ENCODE measurements at regions of chr1 and their contacts with region 1.

Region 1: GRCh38 chr1:42766741-42767509 is at the starts of genes C1orf50 and P3H1:
- DNase-seq: peak; percentile 99 to 100 (median 100)
- ATAC-seq: peak; percentile 92 to 96 (median 92)
- H3K4me3 ChIP-seq: peak within 1 kb of the TSS; percentile 81 to 86
- H3K4me3 Mint-ChIP-seq: no peak within 1 kb of the TSS
- H3K27ac ChIP-seq: peak within 1 kb of the TSS; percentile 66
- H3K27ac Mint-ChIP-seq: peak within 1 kb of the TSS; percentile 92
- H3K4me1 ChIP-seq: peaks cover 22 to 38% of the 10 kb centered on the region in 2 experiments
- H3K4me1 Mint-ChIP-seq: peaks cover 34 to 45% (median 36%) of the 10 kb centered on the region in 3 donors
- H3K27me3 ChIP-seq: no peaks in the 10 kb centered on the region
- H3K27me3 Mint-ChIP-seq: no peaks in the 10 kb centered on the region
- total RNA-seq, gene C1orf50: 12.4 to 15.3 (median 13.9) TPM
- total RNA-seq, gene P3H1: 23.5 to 62.9 (median 58.3) TPM

Region 2: DNA sequence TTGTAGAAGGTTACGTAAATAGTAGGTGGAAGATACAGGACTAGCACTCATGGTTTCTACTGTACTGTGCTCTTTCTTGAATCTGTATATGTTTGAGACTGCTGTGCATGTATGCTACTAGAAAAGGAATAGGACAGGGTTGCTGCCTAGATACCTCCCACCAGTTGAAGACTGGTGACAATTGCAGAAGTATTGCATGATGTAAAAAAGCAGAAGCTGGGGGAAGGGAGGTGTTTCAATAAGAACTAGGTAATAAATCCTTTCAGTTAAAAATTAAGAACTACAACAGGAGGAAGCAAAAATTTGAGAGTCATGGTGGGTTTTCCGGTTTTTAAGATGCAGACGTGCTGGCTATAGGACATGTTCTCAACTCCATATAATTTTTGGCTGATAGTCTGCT is 215.7 kb before region 1 on chr1:
- CTCF ChIA-PET with region 1: no interaction called
- POLR2A ChIA-PET with region 1: interaction called in 1 of 2 experiments, 14 read pairs
- DNase-seq: no peak
- ATAC-seq: no peak
- H3K4me3 ChIP-seq: no peak overlapping the region
- H3K4me3 Mint-ChIP-seq: no peak overlapping the region
- H3K27ac ChIP-seq: no peak overlapping the region
- H3K27ac Mint-ChIP-seq: no peak overlapping the region
- H3K4me1 ChIP-seq: no peaks in the 10 kb centered on the region
- H3K4me1 Mint-ChIP-seq: no peaks in the 10 kb centered on the region
- H3K27me3 ChIP-seq: no peaks in the 10 kb centered on the region
- H3K27me3 Mint-ChIP-seq: no peaks in the 10 kb centered on the region

Region 3: DNA sequence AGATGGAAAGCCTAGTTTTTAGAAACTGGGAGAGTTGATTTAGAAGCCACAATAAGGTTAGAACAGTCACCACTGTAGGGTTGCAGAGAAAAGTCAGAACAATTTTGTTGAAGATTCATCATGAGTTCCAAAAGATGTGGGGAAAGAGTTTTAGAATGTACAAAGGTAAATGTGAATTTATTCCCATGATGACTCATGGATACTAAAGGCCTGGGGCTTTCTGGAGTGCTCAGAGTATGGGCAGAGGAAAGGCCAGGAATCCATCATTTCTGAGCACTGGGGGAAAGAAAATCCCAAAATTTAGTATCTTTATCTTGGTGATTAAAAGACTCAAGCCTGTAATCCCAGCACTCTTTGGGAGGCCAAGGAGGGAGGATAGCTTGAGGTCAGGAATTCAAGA is 66.9 kb before region 1 on chr1:
- CTCF ChIA-PET with region 1: no interaction called
- POLR2A ChIA-PET with region 1: no interaction called
- DNase-seq: no peak
- ATAC-seq: no peak
- H3K4me3 ChIP-seq: no peak overlapping the region
- H3K4me3 Mint-ChIP-seq: no peak overlapping the region
- H3K27ac ChIP-seq: no peak overlapping the region
- H3K27ac Mint-ChIP-seq: no peak overlapping the region
- H3K4me1 ChIP-seq: no peaks in the 10 kb centered on the region
- H3K4me1 Mint-ChIP-seq: peaks cover 9 to 14% (median 10%) of the 10 kb centered on the region in 3 donors
- H3K27me3 ChIP-seq: no peaks in the 10 kb centered on the region
- H3K27me3 Mint-ChIP-seq: no peaks in the 10 kb centered on the region

Region 4: GRCh38 chr1:42846257-42847110 is 79.6 kb after region 1 on chr1 and contains the start of gene ZNF691:
- CTCF ChIA-PET with region 1: interaction called in 1 of 2 experiments, 11 read pairs
- POLR2A ChIA-PET with region 1: interaction called, 3 to 9 read pairs
- DNase-seq: peak; percentile 65 to 94 (median 84)
- ATAC-seq: peak; percentile 98 to 99 (median 98)
- H3K4me3 ChIP-seq: peak within 1 kb of the TSS; percentile 72 to 90
- H3K4me3 Mint-ChIP-seq: peak within 1 kb of the TSS; percentile 86 to 94 (median 89)
- H3K27ac ChIP-seq: peak within 1 kb of the TSS; percentile 32
- H3K27ac Mint-ChIP-seq: peak within 1 kb of the TSS; percentile 73 to 94
- H3K4me1 ChIP-seq: peaks cover 4 to 21% of the 10 kb centered on the region in 2 experiments
- H3K4me1 Mint-ChIP-seq: peaks cover 35 to 40% (median 36%) of the 10 kb centered on the region in 3 donors
- H3K27me3 ChIP-seq: no peaks in the 10 kb centered on the region
- H3K27me3 Mint-ChIP-seq: no peaks in the 10 kb centered on the region
- total RNA-seq, gene ZNF691: 4.7 to 14.9 (median 13.0) TPM

Measured in T-cell (primary cell).